MCF 10A (cell line): ENCODE measurements at regions of chr16 and their contacts with region 1.

Region 1: DNA sequence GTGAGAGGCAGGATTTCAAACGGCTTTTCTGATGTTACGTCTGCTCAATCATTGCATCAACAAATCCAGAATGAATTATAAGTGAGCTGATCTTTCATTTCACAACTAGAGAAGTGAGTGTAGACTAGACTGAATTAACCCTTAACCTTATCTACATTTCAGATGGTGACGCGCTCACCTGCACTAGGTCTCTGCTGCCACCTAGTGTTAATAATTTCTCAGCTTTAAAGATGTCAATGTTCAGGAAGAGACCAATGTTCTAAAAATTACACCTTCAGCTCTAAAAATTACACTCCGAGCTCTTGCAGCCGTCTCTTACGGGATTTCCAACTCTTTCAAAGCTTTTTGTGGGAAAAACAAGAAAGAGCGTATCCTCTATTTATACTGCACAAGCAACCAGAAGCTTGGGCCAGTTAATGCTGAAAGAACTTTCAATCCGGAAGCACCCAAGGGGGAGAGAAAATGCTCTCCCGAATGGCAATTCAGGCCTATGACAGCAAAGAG is 88.2 kb upstream of the FA2H start:
- DNase-seq: peak; percentile 68
- H3K4me3 Mint-ChIP-seq: no peak overlapping the region
- H3K27ac Mint-ChIP-seq: no peak overlapping the region
- H3K4me1 Mint-ChIP-seq: peaks cover 7% of the 10 kb centered on the region
- H3K27me3 Mint-ChIP-seq: no peaks in the 10 kb centered on the region
- CTCF ChIP-seq: peak; percentile 92

Region 2: DNA sequence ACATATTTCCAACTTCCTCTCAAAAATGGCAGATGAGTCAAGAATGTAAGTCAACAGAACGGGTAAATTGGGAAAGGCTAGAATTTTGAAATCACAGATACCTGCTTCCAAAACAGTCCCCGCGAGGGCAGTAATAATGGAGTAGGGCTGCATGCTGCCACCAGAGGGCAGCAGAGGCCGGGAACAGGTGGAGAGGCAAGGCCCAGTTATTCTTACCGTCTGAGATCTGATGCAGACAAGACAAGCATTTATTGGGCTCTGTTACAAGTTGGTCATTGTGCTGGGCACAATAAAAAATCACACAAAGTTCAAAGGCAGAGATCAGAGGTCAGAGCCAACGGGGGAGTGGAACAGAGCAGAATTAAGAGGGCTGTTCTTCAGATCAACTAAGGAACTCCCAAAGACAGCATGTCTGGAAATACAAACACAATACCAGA is 153.3 kb before region 1 on chr16:
- CTCF ChIA-PET with region 1: interaction called, 304 read pairs
- POLR2A ChIA-PET with region 1: interaction called, 13 read pairs
- intact Hi-C with region 1: loop called (anchors 1 kb)
- DNase-seq: peak; percentile 91
- H3K4me3 Mint-ChIP-seq: no peak overlapping the region
- H3K27ac Mint-ChIP-seq: no peak overlapping the region
- H3K4me1 Mint-ChIP-seq: no peaks in the 10 kb centered on the region
- H3K27me3 Mint-ChIP-seq: no peaks in the 10 kb centered on the region
- CTCF ChIP-seq: peak; percentile 93

Region 3: DNA sequence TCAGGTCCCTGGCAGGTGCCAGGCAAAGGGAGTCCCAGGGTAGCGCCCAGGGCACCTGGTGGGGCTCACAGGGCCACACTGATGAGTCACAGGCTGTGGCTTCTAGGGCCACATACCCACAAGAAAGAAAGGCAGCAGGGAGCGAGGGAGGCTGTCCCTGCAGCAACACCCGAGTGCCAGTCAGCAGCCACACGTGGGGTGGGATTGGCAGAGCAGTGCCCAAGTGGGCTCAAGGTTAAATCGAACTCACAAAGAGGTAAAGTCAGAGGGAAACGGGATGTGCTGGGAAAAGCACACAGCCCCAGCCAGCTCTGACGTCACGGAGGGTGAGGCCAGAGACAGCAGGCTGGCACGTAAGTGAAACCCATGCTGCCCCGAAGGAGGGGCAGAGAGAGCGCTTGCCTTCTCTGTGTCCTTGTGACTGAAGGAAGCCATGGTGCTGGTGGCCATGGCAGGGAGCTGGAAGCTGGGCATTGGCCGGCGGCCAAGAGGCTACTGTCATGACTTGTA is 121.9 kb before region 1 on chr16:
- CTCF ChIA-PET with region 1: interaction called, 16 read pairs
- POLR2A ChIA-PET with region 1: interaction called, 4 read pairs
- intact Hi-C with region 1: no loop called
- DNase-seq: peak; percentile 84
- H3K4me3 Mint-ChIP-seq: peak overlapping the region; percentile 36
- H3K27ac Mint-ChIP-seq: peak overlapping the region; percentile 55
- H3K4me1 Mint-ChIP-seq: peaks cover 48% of the 10 kb centered on the region
- H3K27me3 Mint-ChIP-seq: no peaks in the 10 kb centered on the region
- CTCF ChIP-seq: no peak

Region 4: GRCh38 chr16:74813109-74813641 is 49.6 kb before region 1 on chr16:
- CTCF ChIA-PET with region 1: interaction called, 155 read pairs
- POLR2A ChIA-PET with region 1: interaction called, 15 read pairs
- intact Hi-C with region 1: loop called (anchors 1 kb)
- DNase-seq: peak; percentile 73
- H3K4me3 Mint-ChIP-seq: no peak overlapping the region
- H3K27ac Mint-ChIP-seq: no peak overlapping the region
- H3K4me1 Mint-ChIP-seq: peaks cover 15% of the 10 kb centered on the region
- H3K27me3 Mint-ChIP-seq: no peaks in the 10 kb centered on the region
- CTCF ChIP-seq: peak; percentile 90

Region 5: GRCh38 chr16:74852500-74852875 is 10.3 kb before region 1 on chr16:
- CTCF ChIA-PET with region 1: interaction called, 20 read pairs
- POLR2A ChIA-PET with region 1: interaction called, 3 read pairs
- intact Hi-C with region 1: no loop called
- DNase-seq: no peak
- H3K4me3 Mint-ChIP-seq: no peak overlapping the region
- H3K27ac Mint-ChIP-seq: no peak overlapping the region
- H3K4me1 Mint-ChIP-seq: no peaks in the 10 kb centered on the region
- H3K27me3 Mint-ChIP-seq: no peaks in the 10 kb centered on the region
- CTCF ChIP-seq: no peak

Region 6: DNA sequence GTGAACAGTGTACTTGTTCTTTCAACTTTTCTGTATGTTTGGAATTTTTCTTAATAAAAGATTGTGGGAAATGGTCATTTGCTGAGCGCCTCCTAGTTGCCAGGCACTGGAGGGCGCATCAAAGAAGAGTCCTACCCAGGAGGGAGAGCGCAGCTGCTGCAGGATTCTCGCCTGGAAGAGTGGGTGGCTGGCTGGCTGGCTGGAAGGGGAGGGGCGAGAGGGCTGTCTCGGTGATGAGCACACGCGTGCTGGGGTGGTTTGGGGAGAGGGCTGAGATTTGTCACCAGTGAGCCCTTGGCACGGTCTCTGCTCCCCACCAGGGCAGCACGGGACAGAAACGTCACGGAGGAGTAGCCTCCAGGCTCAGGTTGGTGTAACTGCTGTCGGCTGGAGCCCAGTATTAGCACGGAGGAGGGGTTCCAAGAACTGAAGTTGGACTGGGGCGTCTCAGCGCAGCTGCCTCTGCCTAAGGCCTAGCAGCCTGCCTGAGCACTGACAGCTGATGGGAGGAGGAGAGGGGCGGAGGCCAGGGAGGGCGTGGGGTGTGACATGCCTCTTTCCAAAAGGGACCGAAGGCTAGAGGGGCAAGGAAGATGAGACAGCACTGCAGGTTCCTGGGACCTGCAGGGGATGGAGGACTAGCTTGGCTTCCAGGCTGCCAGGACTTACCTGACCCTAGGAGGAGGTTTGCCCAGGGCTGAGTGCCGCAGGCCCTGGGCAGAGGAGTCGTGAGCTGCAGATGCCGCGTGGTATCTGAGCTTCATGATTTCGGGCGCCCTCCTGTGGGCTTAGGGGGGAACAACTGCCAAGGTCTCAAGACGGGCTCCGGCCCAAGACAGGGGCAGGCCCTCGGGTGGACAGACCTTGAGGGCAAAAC is 248.1 kb after region 1 on chr16:
- CTCF ChIA-PET with region 1: interaction called, 18 read pairs
- POLR2A ChIA-PET with region 1: no interaction called
- intact Hi-C with region 1: loop called (anchors 1 kb)
- DNase-seq: peak; percentile 92
- H3K4me3 Mint-ChIP-seq: peak overlapping the region; percentile 67
- H3K27ac Mint-ChIP-seq: peak overlapping the region; percentile 76
- H3K4me1 Mint-ChIP-seq: peaks cover 29% of the 10 kb centered on the region
- H3K27me3 Mint-ChIP-seq: no peaks in the 10 kb centered on the region
- CTCF ChIP-seq: peak; percentile 88